ENCODE measurements at regions of chr12 and their contacts with region 1.

Region 1: GRCh38 chr12:12696562-12697383 is 790 bp upstream of the GPR19 start:
- H3K4me3 Mint-ChIP-seq: peak overlapping the region; percentile 76
- H3K27ac Mint-ChIP-seq: peak overlapping the region; percentile 94
- H3K4me1 Mint-ChIP-seq: peaks cover 33% of the 10 kb centered on the region
- H3K27me3 Mint-ChIP-seq: peaks cover 3% of the 10 kb centered on the region

Region 2: DNA sequence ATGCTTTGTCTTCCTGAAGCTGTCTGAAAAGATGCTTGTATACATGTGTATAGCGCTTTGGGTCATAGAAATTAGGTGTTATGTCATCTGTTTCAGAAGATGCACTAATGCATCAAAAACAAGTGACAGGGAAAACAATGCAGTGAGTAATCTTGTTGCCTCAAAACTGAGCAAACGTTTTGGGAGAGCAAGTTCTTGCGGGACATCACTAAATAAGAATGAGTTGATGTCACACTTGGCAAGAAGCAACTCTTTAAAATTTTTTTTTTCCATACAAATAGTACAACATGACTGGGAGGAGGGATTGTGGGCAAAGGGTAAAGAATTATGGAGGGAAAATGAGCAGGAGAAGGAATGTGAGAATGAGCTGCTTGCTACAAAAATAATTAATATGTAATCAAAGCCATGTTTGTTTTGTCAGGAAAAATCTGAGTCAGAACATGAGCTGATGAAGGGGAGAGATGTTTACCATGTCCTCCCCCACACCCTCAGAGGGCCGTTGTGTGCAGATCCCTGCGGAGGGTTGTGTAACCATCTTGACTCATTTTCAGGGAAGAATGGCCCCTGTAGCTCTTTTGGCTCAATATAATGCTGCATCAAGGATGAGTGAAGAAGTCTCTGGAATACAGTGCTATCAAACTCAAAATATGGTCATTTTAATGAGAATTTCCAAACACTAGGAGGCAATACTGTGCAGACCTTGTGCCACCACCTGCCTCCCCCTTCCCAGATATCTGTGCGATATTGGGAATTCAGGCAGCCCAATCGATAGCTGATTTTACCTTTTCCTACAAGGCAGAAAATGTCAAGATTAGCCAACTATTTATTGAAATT is 298.5 kb before region 1 on chr12:
- intact Hi-C with region 1: no loop called
- H3K4me3 Mint-ChIP-seq: no peak overlapping the region
- H3K27ac Mint-ChIP-seq: no peak overlapping the region
- H3K4me1 Mint-ChIP-seq: peaks cover 18% of the 10 kb centered on the region
- H3K27me3 Mint-ChIP-seq: no peaks in the 10 kb centered on the region

Region 3: DNA sequence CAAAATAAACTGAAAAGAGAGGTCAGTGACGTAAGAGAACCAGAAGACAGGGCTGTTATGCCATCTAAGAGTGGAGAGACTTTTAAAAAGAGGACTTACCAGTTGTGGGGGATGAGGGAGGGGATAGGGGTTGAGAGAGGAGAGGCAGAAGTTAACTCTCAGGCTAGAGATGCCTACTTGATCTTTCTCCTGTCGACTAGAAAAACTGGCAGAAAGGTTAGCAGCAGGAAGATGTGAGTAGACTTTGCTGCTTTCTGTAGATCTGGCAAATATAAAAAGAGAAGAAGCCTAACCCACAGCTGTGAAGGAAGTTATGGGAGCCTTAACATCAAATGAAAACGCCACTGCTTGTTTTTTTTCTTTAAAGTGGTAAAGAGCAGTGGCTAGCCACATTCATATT is 74.4 kb before region 1 on chr12:
- intact Hi-C with region 1: loop called (anchors 5 kb)
- H3K4me3 Mint-ChIP-seq: peak overlapping the region; percentile 65
- H3K27ac Mint-ChIP-seq: peak overlapping the region; percentile 84
- H3K4me1 Mint-ChIP-seq: peaks cover 97% of the 10 kb centered on the region
- H3K27me3 Mint-ChIP-seq: no peaks in the 10 kb centered on the region

Region 4: DNA sequence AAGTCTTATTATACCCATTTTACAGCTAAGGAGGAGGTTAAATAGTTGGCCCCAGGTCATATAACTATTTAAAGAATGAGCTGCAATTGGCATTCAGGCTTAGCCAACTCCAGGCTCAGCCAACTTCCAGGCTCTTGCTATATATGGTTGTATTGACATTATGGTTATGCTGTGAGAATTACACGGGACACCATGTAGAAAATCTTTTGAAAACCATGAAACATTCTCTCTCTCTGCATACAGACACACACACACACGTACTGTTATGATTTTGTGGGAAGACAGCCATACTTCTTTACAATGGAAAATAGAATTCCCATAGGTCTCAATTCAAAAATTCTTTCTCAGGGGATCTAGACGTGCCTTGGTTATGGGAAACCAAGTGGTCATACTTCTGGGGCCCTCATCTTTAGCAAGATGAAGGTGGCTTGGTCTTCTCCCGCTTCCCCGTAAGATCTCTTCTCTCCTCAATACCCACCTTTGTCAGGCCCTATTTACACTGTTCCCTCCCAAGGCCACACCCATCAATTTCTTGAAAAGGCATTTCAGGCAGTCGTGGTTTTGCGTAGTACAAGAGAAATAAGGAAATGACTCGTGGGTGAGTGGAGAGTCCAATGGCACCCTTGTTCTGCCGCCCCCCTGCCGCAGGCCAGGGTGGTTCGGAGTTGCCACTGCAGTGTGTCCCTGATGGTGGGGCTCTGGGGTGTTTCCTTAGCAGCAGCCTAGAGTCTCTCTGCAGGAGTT is 184.6 kb after region 1 on chr12:
- intact Hi-C with region 1: no loop called
- H3K4me3 Mint-ChIP-seq: no peak overlapping the region
- H3K27ac Mint-ChIP-seq: no peak overlapping the region
- H3K4me1 Mint-ChIP-seq: peaks cover 6% of the 10 kb centered on the region
- H3K27me3 Mint-ChIP-seq: no peaks in the 10 kb centered on the region

Measured in dendritic cell treated with granulocyte-macrophage colony-stimulating factor and Interleukin-4, amounts not matched to agents 40 ng/mL and 50 ng/mL, for 4 days (primary cell).